ENCODE measurements at regions of chr19 and their contacts with region 1.

Region 1: GRCh38 chr19:49983645-49984229 is 22.8 kb upstream of the SIGLEC11 start:
- DNase-seq: peak; percentile 27 to 89
- H3K4me3 ChIP-seq: no peak overlapping the region
- CTCF ChIP-seq: peak in 1 of 3 donors; percentile 32
- POLR2A ChIP-seq: no peak

Region 2: GRCh38 chr19:49939721-49940481 is 43.8 kb before region 1 on chr19:
- intact Hi-C with region 1: loop called (anchors 5 kb)
- DNase-seq: no peak
- H3K4me3 ChIP-seq: no peak overlapping the region
- CTCF ChIP-seq: no peak
- POLR2A ChIP-seq: no peak

Region 3: DNA sequence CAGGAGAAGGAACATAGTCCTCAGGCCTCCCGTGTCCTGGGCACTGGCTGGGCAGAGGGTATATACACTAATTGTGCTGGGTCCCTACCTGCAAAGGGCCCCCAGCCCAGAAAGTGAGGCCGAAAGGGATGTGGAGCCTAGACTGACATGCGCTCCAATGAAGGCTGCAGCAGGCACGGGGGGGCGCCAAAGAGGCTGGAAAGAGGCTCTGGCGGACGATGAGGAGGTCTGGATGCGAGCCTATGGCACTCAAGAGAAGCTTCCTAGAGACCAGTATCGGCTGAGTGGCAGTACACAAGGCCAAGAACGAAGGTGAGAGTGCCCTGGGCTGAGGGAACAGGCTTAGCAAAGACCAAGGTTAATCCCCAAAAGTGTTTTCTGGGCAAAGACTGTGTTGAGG is 24.8 kb after region 1 on chr19:
- intact Hi-C with region 1: no loop called
- DNase-seq: no peak
- H3K4me3 ChIP-seq: no peak overlapping the region
- CTCF ChIP-seq: no peak
- POLR2A ChIP-seq: no peak

Measured in lower leg skin (tissue), 4 donors.